Activated CD8-positive, alpha-beta memory T cell treated with anti-CD3 and anti-CD28 coated beads, Interleukin-2, amount 10 ng/mL, durations not matched to agents 7 days and 5 days (primary cell): ENCODE measurements at regions of chr10 and their contacts with region 1.

Region 1: GRCh38 chr10:6202684-6203330 is at the start of gene PFKFB3:
- DNase-seq: peak; percentile 95
- ATAC-seq: peak; percentile 70
- H3K4me3 Mint-ChIP-seq: peak within 1 kb of the TSS; percentile 98
- H3K27ac Mint-ChIP-seq: peak within 1 kb of the TSS; percentile 93
- H3K4me1 Mint-ChIP-seq: peaks cover 36% of the 10 kb centered on the region
- H3K27me3 Mint-ChIP-seq: no peaks in the 10 kb centered on the region
- total RNA-seq, gene PFKFB3: 57.1 to 59.3 TPM

Region 2: GRCh38 chr10:6006991-6007390 is 195.8 kb before region 1 on chr10:
- CTCF ChIA-PET with region 1: no interaction called
- DNase-seq: no peak
- ATAC-seq: no peak
- H3K4me3 Mint-ChIP-seq: no peak overlapping the region
- H3K27ac Mint-ChIP-seq: no peak overlapping the region
- H3K4me1 Mint-ChIP-seq: peaks cover 47% of the 10 kb centered on the region
- H3K27me3 Mint-ChIP-seq: no peaks in the 10 kb centered on the region

Region 3: DNA sequence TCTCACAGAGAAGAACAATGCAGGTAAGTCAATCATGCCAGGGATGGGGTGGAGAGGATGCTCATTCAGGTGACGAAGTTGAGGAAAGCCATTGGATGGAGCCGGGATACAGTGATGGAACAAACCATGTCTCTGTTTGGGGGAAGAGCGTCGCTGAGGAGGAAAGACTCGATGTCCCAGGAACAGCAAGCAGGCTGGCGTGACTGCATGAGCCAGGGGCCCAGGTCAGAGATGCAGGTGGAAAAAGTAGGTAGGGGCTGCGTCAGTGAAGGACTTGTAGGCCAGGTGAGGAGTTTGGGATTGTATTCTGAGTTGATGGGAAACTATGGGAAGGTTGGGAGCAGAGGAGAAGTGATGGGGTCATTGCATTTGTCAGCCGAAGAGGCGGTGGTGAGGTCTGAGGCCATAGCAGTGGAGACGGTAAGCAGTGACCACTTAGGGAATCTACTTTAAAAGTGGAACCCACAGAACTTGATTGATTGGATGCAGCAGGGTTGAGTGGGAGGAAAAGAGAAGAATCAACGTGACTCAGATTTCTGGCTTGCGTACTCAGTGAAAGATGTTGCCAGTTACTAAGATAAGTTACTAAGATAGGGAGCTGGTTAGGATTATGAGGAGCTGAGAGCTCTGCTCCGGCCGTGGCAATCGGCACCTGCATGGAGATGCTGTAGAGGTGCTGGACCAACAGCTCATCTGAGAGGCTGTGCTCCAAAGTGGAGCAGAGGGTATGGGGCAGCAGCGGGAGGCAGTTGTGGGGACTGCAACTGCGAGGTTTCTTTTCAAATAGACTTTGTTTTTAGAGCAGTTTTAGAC is 128.1 kb before region 1 on chr10:
- CTCF ChIA-PET with region 1: no interaction called
- DNase-seq: peak; percentile 48
- ATAC-seq: peak; percentile 42
- H3K4me3 Mint-ChIP-seq: peak overlapping the region; percentile 45
- H3K27ac Mint-ChIP-seq: peak overlapping the region; percentile 76
- H3K4me1 Mint-ChIP-seq: peaks cover 70% of the 10 kb centered on the region
- H3K27me3 Mint-ChIP-seq: no peaks in the 10 kb centered on the region

Region 4: DNA sequence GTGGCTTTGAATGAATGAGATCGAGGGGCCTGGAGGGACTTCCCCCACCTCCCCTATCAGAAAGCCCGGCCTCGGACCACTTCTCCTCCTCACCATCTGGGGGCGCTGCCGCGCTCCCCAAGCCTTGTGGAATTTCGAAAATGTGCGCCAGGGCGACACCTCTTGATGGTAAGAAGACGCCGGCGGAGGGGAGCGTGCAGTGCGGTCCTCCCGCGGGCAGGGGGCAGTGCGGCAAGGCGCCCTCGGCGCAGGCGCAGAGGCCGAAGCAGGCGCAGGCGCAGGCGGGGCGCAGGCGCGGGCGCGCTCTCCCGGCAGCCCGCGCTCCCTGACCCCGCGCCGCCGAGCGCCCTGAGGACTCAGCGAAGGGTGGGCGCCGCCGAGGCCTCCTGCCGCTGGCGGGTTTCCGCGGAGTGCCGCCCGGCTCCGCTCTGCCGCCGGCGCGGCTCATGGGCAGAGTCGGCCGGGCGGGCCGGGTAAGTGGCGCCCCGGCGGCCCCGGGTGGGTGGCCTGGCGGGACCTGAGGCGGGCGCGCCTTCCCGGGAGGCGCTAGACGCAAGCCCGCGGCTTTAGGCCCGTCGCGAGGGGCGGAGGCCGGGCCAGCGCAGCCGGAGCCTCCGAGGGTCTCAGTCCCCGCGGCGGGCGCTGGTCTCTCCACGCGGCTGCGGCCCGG is 114.0 kb before region 1 on chr10 and contains the start of gene RBM17:
- CTCF ChIA-PET with region 1: interaction called, 13 read pairs
- DNase-seq: peak; percentile 98
- ATAC-seq: peak; percentile 84
- H3K4me3 Mint-ChIP-seq: peak within 1 kb of the TSS; percentile 87
- H3K27ac Mint-ChIP-seq: peak within 1 kb of the TSS; percentile 85
- H3K4me1 Mint-ChIP-seq: peaks cover 70% of the 10 kb centered on the region
- H3K27me3 Mint-ChIP-seq: no peaks in the 10 kb centered on the region
- total RNA-seq, gene RBM17: 205 to 267 TPM

Region 5: DNA sequence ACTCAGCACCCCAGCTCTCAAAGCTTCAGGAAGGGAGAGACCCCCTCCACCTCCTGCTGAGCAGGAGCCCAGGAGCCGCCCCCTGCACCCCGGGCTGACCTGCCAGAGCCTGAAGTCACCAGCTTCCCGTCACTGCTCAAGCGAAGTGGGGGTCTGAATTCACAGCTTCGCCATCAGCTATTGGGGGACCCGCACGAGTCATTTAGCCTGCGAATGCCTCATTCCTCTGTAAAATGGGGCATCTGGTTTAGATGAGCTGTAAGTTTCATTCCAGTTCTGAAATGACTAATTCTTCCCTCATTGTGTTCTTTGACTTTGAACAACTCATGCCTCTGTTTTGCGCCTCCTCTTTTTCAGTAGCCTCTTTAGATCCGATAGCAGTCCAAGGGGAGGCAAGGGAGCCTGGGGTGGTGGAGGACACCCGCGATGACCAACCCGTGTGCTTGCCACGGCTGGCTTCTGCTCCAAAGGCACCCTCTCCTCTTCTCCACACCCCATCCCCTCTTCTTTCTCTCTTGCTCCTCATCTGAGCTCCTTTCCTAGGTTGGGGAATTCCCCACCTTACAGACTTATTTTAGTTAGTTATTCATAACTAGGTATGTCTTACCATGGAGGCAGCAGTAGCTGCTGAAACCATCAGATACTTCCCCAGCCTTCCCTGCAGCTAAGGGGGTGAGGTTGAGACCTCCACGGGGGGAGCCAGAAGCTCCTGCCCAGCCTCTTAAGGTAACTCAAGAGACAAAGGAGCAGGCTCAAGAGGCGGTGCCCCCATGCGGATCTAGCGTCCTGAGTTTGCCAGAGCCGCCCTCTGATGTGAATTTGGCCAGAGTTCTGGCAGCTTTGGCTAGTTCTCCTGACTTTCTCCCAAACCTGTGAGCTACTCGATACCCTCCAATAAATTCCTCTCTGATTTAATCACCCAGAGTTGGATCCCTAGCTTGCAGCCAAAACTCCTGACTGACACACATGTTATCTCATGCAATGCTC is 66.3 kb before region 1 on chr10:
- CTCF ChIA-PET with region 1: interaction called, 11 read pairs
- DNase-seq: peak; percentile 83
- ATAC-seq: peak; percentile 65
- H3K4me3 Mint-ChIP-seq: peak overlapping the region; percentile 41
- H3K27ac Mint-ChIP-seq: peak overlapping the region; percentile 52
- H3K4me1 Mint-ChIP-seq: peaks cover 57% of the 10 kb centered on the region
- H3K27me3 Mint-ChIP-seq: peaks cover 25% of the 10 kb centered on the region

Region 6: GRCh38 chr10:6171881-6172695 is 30.7 kb before region 1 on chr10:
- CTCF ChIA-PET with region 1: interaction called, 46 read pairs
- DNase-seq: no peak
- ATAC-seq: no peak
- H3K4me3 Mint-ChIP-seq: no peak overlapping the region
- H3K27ac Mint-ChIP-seq: no peak overlapping the region
- H3K4me1 Mint-ChIP-seq: peaks cover 55% of the 10 kb centered on the region
- H3K27me3 Mint-ChIP-seq: no peaks in the 10 kb centered on the region

Region 7: GRCh38 chr10:6225263-6225814 is 22.5 kb after region 1 on chr10:
- CTCF ChIA-PET with region 1: no interaction called
- DNase-seq: no peak
- ATAC-seq: no peak
- H3K4me3 Mint-ChIP-seq: no peak overlapping the region
- H3K27ac Mint-ChIP-seq: no peak overlapping the region
- H3K4me1 Mint-ChIP-seq: peaks cover 3% of the 10 kb centered on the region
- H3K27me3 Mint-ChIP-seq: no peaks in the 10 kb centered on the region

Region 8: DNA sequence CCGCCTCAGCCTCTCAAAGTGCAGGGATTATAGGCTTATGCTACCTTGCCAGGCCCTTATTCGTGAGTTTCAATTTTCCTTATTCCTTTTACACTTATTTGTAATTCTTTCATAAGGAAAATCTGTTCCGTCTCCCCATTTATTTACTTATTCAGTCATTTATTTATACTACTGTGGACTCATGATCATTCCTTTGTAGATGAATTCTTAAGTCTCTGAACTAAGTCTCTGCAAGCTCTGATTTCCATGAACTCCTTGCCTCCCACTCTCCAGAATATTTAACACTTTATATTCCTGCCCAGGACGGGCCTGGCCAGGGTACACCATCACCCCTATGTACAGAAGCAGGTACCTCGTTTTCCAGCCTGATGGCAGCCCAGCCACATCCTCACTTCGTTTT is 39.3 kb after region 1 on chr10:
- CTCF ChIA-PET with region 1: interaction called, 10 read pairs
- DNase-seq: no peak
- ATAC-seq: no peak
- H3K4me3 Mint-ChIP-seq: no peak overlapping the region
- H3K27ac Mint-ChIP-seq: no peak overlapping the region
- H3K4me1 Mint-ChIP-seq: peaks cover 32% of the 10 kb centered on the region
- H3K27me3 Mint-ChIP-seq: no peaks in the 10 kb centered on the region

Region 9: GRCh38 chr10:6275022-6275997 is 72.5 kb after region 1 on chr10:
- CTCF ChIA-PET with region 1: interaction called, 21 read pairs
- DNase-seq: peak; percentile 95
- ATAC-seq: peak; percentile 88
- H3K4me3 Mint-ChIP-seq: peak overlapping the region; percentile 59
- H3K27ac Mint-ChIP-seq: peak overlapping the region; percentile 89
- H3K4me1 Mint-ChIP-seq: peaks cover 64% of the 10 kb centered on the region
- H3K27me3 Mint-ChIP-seq: no peaks in the 10 kb centered on the region

Region 10: DNA sequence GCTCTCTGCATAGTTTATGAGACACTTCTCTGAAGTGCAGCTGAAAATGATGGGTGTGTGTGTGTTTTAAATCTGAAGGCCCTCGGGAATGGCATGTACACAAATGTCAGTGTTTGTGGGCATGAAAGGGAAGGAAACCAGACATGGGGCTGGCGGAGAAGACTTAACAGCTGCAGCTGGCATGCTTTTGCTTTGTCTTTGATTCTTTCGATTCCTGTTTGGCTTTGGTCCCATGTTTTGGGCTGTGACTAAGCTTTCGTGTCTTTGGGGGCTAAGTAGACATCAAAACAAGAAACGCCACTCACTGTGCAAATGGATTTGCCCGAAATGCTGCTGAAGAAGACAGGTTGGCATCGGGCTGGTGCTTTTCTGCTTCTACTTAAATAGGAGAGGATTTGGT is 179.3 kb after region 1 on chr10:
- CTCF ChIA-PET with region 1: interaction called, 17 read pairs
- DNase-seq: peak; percentile 61
- ATAC-seq: peak; percentile 64
- H3K4me3 Mint-ChIP-seq: peak overlapping the region; percentile 64
- H3K27ac Mint-ChIP-seq: peak overlapping the region; percentile 77
- H3K4me1 Mint-ChIP-seq: peaks cover 22% of the 10 kb centered on the region
- H3K27me3 Mint-ChIP-seq: no peaks in the 10 kb centered on the region